Endothelial cell of umbilical vein (primary cell): ENCODE measurements at regions of chr6 and their contacts with region 1.

Region 1: GRCh38 chr6:3281631-3282475 is 23.1 kb downstream of the PSMG4 start:
- DNase-seq: peak; percentile 94
- H3K4me3 ChIP-seq: no peak overlapping the region
- H3K27ac ChIP-seq: peak overlapping the region; percentile 97
- H3K4me1 ChIP-seq: peaks cover 27% of the 10 kb centered on the region
- H3K27me3 ChIP-seq: no peaks in the 10 kb centered on the region
- CTCF ChIP-seq: no peak
- POLR2A ChIP-seq: no peak

Region 2: GRCh38 chr6:3324262-3324942 is 42.5 kb after region 1 on chr6:
- CTCF ChIA-PET with region 1: interaction called, 10 read pairs
- POLR2A ChIA-PET with region 1: interaction called, 10 read pairs
- dilution Hi-C with region 1: no loop called
- intact Hi-C with region 1: loop called (anchors 1 kb)
- DNase-seq: peak; percentile 93
- H3K4me3 ChIP-seq: no peak overlapping the region
- H3K27ac ChIP-seq: peak overlapping the region; percentile 89
- H3K4me1 ChIP-seq: peaks cover 23% of the 10 kb centered on the region
- H3K27me3 ChIP-seq: no peaks in the 10 kb centered on the region
- CTCF ChIP-seq: no peak
- POLR2A ChIP-seq: no peak

Region 3: GRCh38 chr6:3456755-3457466 is 175.1 kb after region 1 on chr6 and contains the start of gene SLC22A23:
- CTCF ChIA-PET with region 1: interaction called, 7 read pairs
- POLR2A ChIA-PET with region 1: no interaction called
- dilution Hi-C with region 1: no loop called
- intact Hi-C with region 1: loop called (anchors 1 kb)
- DNase-seq: peak; percentile 39
- H3K4me3 ChIP-seq: peak within 1 kb of the TSS; percentile 18 to 67 (median 46)
- H3K27ac ChIP-seq: no peak within 1 kb of the TSS
- H3K4me1 ChIP-seq: peaks cover 5% of the 10 kb centered on the region
- H3K27me3 ChIP-seq: peaks cover 7 to 20% of the 10 kb centered on the region in 2 experiments
- CTCF ChIP-seq: peak; percentile 35 to 60
- POLR2A ChIP-seq: no peak
- total RNA-seq, gene SLC22A23: 10.8 and 14.3 TPM in 2 replicates

Region 4: GRCh38 chr6:3561725-3562124 is 279.9 kb after region 1 on chr6:
- CTCF ChIA-PET with region 1: interaction called, 5 read pairs
- POLR2A ChIA-PET with region 1: no interaction called
- dilution Hi-C with region 1: no loop called
- intact Hi-C with region 1: loop called (anchors 1 kb)
- DNase-seq: peak; percentile 98
- H3K4me3 ChIP-seq: no peak overlapping the region
- H3K27ac ChIP-seq: peak overlapping the region; percentile 59
- H3K4me1 ChIP-seq: peaks cover 18% of the 10 kb centered on the region
- H3K27me3 ChIP-seq: peaks cover 0 to 2% of the 10 kb centered on the region in 2 experiments
- CTCF ChIP-seq: peak; percentile 28 to 44
- POLR2A ChIP-seq: no peak

Region 5: GRCh38 chr6:3825851-3826581 is 544.2 kb after region 1 on chr6:
- CTCF ChIA-PET with region 1: interaction called, 3 read pairs
- POLR2A ChIA-PET with region 1: no interaction called
- dilution Hi-C with region 1: no loop called
- intact Hi-C with region 1: loop called (anchors 2 kb)
- DNase-seq: peak; percentile 100
- H3K4me3 ChIP-seq: peak overlapping the region in 1 of 3 experiments; percentile 15
- H3K27ac ChIP-seq: peak overlapping the region; percentile 96
- H3K4me1 ChIP-seq: peaks cover 43% of the 10 kb centered on the region
- H3K27me3 ChIP-seq: no peaks in the 10 kb centered on the region
- CTCF ChIP-seq: no peak
- POLR2A ChIP-seq: no peak

Region 6: DNA sequence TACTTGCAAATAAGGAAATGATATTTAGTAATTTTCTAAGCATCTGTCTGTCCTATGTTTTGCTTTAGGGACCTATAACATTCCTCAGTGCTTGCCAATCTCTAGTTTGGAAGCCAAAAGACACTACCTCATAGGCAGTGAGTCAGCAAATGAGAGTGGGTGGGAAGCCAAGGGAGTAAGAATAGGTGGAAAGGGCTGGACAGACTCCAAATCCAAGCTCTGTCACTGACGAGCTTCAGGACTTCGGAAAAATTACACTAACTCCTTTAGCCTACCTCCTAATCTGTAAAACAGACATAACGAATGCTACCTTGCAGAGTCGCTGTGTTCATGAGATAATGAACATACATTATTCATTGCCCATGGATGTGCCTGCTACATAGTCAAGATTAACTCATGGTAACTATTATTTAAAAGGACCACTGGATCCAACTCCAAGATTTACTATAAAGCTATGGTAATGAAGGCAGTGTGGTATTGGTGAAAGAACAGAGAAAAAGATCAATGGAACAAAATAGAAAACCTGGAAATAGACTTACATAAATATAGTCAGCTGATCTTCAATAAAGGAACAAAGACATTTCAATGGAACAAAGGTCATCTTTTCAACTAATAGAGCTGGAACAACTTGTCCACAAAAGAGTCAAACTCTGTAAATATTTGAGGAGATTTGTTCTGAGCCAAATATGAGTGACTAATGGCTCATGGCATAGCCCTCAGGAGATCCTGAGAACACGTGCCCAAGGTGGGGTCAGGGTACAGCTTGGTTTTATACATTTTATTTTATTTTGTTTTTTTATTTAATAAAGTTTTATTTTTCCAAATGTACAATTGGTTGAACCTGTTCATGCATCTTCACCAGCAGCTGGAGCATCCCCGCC is 631.5 kb after region 1 on chr6:
- CTCF ChIA-PET with region 1: interaction called, 3 read pairs
- POLR2A ChIA-PET with region 1: interaction called, 4 read pairs
- dilution Hi-C with region 1: no loop called
- intact Hi-C with region 1: loop called (anchors 5 kb)
- DNase-seq: peak; percentile 99
- H3K4me3 ChIP-seq: peak overlapping the region in 1 of 3 experiments; percentile 10
- H3K27ac ChIP-seq: peak overlapping the region; percentile 98
- H3K4me1 ChIP-seq: peaks cover 72% of the 10 kb centered on the region
- H3K27me3 ChIP-seq: no peaks in the 10 kb centered on the region
- CTCF ChIP-seq: no peak
- POLR2A ChIP-seq: peak; percentile 52

Region 7: GRCh38 chr6:3990692-3991501 is 709.0 kb after region 1 on chr6:
- CTCF ChIA-PET with region 1: interaction called, 21 read pairs
- POLR2A ChIA-PET with region 1: no interaction called
- dilution Hi-C with region 1: loop called (anchors 25 kb)
- intact Hi-C with region 1: loop called (anchors 1 kb)
- DNase-seq: peak; percentile 91
- H3K4me3 ChIP-seq: no peak overlapping the region
- H3K27ac ChIP-seq: no peak overlapping the region
- H3K4me1 ChIP-seq: peaks cover 17% of the 10 kb centered on the region
- H3K27me3 ChIP-seq: no peaks in the 10 kb centered on the region
- CTCF ChIP-seq: peak; percentile 92 to 94
- POLR2A ChIP-seq: no peak